Dendritic cell treated with granulocyte-macrophage colony-stimulating factor and Interleukin-4, amounts not matched to agents 40 ng/mL and 50 ng/mL, for 4 days (primary cell): ENCODE measurements at regions of chr4 and their contacts with region 1.

Region 1: DNA sequence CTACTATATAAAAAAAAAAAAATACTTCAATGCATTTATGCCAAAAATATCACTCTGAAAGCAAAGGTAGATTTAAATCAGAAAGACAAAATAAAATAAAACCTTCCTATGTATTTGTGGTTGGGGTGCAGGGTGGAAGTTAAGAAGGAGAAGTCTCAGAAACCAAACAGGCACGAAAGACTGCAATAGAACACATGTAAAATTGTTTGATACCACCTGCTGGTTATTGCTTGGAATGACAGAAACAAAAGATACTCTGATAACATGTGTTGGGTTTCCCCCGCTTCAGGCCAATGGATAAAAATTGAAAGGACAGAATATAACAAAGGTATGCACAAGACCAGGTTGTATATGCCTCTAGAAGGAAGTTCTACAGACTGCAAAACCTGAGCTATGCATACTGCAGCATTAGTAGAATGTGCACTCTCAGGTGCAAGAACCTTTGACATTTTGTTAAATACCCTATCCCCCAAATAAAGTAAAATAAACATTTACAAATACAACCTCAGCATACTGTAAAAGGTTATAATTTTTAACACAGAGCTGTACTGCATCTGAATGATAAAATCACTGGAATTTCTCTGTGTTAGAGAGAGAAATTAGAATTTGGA is 118.8 kb downstream of the GABRA2 start:
- H3K4me3 Mint-ChIP-seq: no peak overlapping the region
- H3K27ac Mint-ChIP-seq: no peak overlapping the region
- H3K4me1 Mint-ChIP-seq: no peaks in the 10 kb centered on the region
- H3K27me3 Mint-ChIP-seq: no peaks in the 10 kb centered on the region

Region 2: GRCh38 chr4:44760142-44760898 is 1510.8 kb before region 1 on chr4:
- intact Hi-C with region 1: loop called (anchors 10 kb)
- H3K4me3 Mint-ChIP-seq: no peak overlapping the region
- H3K27ac Mint-ChIP-seq: no peak overlapping the region
- H3K4me1 Mint-ChIP-seq: no peaks in the 10 kb centered on the region
- H3K27me3 Mint-ChIP-seq: peaks cover 1% of the 10 kb centered on the region

Region 3: DNA sequence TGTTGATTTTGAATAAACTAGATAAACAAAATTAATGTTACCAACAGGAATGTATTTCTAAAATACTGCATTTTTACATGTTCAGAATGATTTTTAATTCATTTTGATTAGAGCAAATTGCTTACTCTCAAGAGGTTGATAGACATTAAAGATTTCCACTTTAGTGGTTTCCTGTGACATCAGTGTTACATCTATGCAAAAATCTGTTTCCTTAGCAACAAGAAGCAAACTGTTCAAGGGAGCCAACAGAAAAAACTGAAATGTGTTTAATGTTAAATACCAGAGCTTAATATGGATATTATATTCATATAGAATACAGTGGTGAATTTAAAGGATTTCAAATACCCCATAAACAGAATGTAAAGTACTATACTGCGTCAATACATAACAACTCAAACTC is 425.1 kb before region 1 on chr4:
- intact Hi-C with region 1: no loop called
- H3K4me3 Mint-ChIP-seq: no peak overlapping the region
- H3K27ac Mint-ChIP-seq: no peak overlapping the region
- H3K4me1 Mint-ChIP-seq: no peaks in the 10 kb centered on the region
- H3K27me3 Mint-ChIP-seq: no peaks in the 10 kb centered on the region